K562 (cell line): ENCODE measurements at regions of chr15 and their contacts with region 1.

Region 1: DNA sequence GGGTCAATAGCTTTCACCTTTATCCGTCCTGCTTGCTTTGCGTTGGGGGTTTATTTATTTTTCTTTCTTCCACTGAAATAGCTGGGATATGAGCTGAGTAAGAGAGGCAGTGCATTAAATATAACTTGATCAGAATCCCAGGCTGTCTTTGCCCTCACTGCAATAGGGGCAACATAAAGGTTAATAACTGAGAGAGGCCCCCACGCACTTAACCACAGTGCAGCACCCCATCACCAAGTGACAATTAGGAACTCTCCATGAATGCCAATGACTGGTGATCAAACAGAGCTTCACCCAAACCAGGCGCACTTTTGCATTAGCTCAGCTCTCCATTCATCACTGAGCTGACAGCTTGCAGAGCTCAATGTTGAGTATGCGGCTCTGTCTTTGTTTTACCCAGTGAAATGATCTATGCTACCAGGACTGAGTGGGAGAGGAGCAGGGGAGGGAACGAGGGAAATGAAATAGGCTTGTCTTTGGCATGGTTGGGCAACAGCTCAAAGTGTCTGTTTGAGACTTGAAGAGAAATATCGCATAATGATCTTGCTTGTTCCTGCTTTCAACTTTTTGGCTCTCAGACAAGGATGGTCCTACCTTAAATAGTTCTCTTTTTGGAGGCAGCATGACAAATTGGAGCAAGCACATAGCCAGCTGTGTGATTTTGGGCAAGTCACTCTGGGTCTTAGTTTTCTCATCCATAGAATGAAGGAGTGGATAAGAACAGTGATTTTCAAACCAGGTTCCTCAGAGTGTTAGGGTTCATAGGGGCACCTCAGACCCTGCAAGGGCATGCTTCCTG is 14.5 kb upstream of the GLCE start:
- DNase-seq: no peak
- ATAC-seq: no peak
- H3K4me3 ChIP-seq: no peak overlapping the region
- H3K27ac ChIP-seq: no peak overlapping the region
- H3K4me1 ChIP-seq: no peaks in the 10 kb centered on the region
- H3K27me3 ChIP-seq: peaks cover 7% of the 10 kb centered on the region in 2 experiments; a peak in 3 of 5 replicates
- CTCF ChIP-seq: no peak
- EP300 ChIP-seq: no peak
- POLR2A ChIP-seq: no peak
- RAD21 ChIP-seq: no peak

Region 2: DNA sequence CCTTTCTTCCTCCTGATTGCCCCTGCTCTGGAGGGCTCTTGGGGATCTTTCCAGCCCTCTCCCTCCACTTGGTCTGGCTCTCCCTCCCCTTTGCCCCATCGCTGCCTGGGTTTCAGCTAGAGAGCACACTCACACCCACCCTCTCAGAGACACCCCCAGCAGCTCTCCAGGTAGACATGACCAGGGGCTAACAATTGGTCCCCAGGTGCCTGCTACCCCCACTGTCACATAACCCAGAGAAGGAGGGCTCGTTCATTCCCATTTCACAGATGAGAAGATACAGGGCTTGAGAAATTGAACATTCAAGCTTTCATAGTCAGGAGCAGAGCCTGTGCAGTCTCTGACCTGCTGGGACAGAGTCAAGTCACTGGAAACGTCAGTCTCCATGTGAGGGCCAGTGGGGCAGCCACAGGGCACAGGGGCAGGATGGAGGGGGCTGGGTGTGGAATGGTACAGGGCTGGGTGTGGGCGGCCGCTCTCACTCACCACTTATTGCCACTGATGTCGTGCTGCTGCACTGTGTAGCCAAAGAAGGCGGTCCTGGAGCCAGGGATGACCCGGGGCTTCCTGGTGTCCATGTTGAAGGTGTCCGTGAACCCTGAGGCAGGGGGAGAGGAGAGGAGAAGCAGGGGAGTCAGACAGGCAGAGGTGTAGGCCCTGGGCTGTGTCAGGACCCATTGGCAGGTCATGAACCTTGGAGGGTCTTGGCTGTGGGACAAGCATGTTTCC is 743.3 kb before region 1 on chr15:
- CTCF ChIA-PET with region 1: no interaction called
- POLR2A ChIA-PET with region 1: no interaction called
- in situ Hi-C with region 1: loop called (anchors 5 kb)
- intact Hi-C with region 1: no loop called
- DNase-seq: no peak
- ATAC-seq: no peak; the same call in 2 of the 3 replicates
- H3K4me3 ChIP-seq: no peak overlapping the region
- H3K27ac ChIP-seq: no peak overlapping the region
- H3K4me1 ChIP-seq: peaks cover 0 to 4% of the 10 kb centered on the region in 2 experiments; a peak in 2 of 5 replicates
- H3K27me3 ChIP-seq: peaks cover 2 to 11% of the 10 kb centered on the region in 2 experiments; a peak in 3 of 5 replicates
- CTCF ChIP-seq: no peak
- EP300 ChIP-seq: no peak
- POLR2A ChIP-seq: no peak
- RAD21 ChIP-seq: no peak